MCF 10A (cell line): ENCODE measurements at regions of chr5 and their contacts with region 1.

Region 1: GRCh38 chr5:308672-309271 is 12.7 kb upstream of the AHRR start:
- DNase-seq: peak; percentile 75
- H3K4me3 Mint-ChIP-seq: no peak overlapping the region
- H3K27ac Mint-ChIP-seq: no peak overlapping the region
- H3K4me1 Mint-ChIP-seq: peaks cover 10% of the 10 kb centered on the region
- H3K27me3 Mint-ChIP-seq: no peaks in the 10 kb centered on the region
- CTCF ChIP-seq: peak; percentile 25

Region 2: GRCh38 chr5:188488-189481 is 120.0 kb before region 1 on chr5:
- CTCF ChIA-PET with region 1: interaction called, 4 read pairs
- POLR2A ChIA-PET with region 1: no interaction called
- intact Hi-C with region 1: loop called (anchors 1 kb)
- DNase-seq: peak; percentile 87
- H3K4me3 Mint-ChIP-seq: peak overlapping the region; percentile 11
- H3K27ac Mint-ChIP-seq: no peak overlapping the region
- H3K4me1 Mint-ChIP-seq: no peaks in the 10 kb centered on the region
- H3K27me3 Mint-ChIP-seq: peaks cover 12% of the 10 kb centered on the region
- CTCF ChIP-seq: peak; percentile 92